Activated T-helper 2 cell treated with anti-CD3 and anti-CD28 coated beads, Interferon-gamma antibody, Interleukin-2, Interleukin-4, amounts not matched to agents 10 μg/mL and 5 μg/mL and 100 μg/mL, durations not matched to agents 14 hours and 24 hours and 36 hours (primary cell): ENCODE measurements at regions of chr15 and their contacts with region 1.

Region 1: GRCh38 chr15:73240866-73241499 is 127.8 kb downstream of the HCN4 start:
- DNase-seq: peak; percentile 55
- H3K4me3 Mint-ChIP-seq: no peak overlapping the region
- H3K27ac Mint-ChIP-seq: no peak overlapping the region
- H3K4me1 Mint-ChIP-seq: peaks cover 7% of the 10 kb centered on the region
- H3K27me3 Mint-ChIP-seq: no peaks in the 10 kb centered on the region

Region 2: DNA sequence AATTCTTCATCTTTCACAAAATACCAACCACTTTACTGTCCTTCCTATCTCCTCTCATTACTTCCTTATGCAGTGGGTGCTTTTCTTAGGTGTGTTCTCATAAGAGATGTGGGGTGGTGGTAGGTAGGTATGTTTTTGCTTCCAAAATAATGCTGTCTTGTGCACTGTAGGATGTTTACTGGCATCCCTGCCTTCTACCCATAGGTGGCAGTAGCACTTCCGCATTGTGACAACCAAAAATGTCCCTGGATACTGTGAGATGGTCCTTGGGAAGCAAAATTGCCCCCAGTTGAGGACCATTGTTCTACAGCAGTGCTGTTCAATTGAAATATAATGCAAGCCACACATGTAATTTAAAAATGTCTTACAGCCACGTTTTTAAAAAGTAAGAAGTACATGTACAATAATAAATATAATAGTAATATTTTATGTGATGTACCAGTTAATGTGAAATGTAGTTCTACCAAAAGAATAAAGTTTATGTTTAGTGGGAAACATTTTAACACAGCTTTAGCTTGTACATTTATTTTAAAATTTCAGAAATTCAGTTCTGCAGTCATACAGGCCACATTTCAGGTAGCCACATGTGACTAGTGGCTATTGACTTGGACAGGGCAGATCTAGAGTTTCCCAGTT is 113.6 kb before region 1 on chr15:
- intact Hi-C with region 1: loop called (anchors 10 kb)
- DNase-seq: no peak
- H3K4me3 Mint-ChIP-seq: no peak overlapping the region
- H3K27ac Mint-ChIP-seq: peak overlapping the region; percentile 26
- H3K4me1 Mint-ChIP-seq: peaks cover 19% of the 10 kb centered on the region
- H3K27me3 Mint-ChIP-seq: no peaks in the 10 kb centered on the region

Region 3: GRCh38 chr15:73258271-73259108 is 17.5 kb after region 1 on chr15:
- intact Hi-C with region 1: loop called (anchors 2 kb)
- DNase-seq: no peak
- H3K4me3 Mint-ChIP-seq: no peak overlapping the region
- H3K27ac Mint-ChIP-seq: peak overlapping the region; percentile 13
- H3K4me1 Mint-ChIP-seq: peaks cover 11% of the 10 kb centered on the region
- H3K27me3 Mint-ChIP-seq: no peaks in the 10 kb centered on the region

Region 4: DNA sequence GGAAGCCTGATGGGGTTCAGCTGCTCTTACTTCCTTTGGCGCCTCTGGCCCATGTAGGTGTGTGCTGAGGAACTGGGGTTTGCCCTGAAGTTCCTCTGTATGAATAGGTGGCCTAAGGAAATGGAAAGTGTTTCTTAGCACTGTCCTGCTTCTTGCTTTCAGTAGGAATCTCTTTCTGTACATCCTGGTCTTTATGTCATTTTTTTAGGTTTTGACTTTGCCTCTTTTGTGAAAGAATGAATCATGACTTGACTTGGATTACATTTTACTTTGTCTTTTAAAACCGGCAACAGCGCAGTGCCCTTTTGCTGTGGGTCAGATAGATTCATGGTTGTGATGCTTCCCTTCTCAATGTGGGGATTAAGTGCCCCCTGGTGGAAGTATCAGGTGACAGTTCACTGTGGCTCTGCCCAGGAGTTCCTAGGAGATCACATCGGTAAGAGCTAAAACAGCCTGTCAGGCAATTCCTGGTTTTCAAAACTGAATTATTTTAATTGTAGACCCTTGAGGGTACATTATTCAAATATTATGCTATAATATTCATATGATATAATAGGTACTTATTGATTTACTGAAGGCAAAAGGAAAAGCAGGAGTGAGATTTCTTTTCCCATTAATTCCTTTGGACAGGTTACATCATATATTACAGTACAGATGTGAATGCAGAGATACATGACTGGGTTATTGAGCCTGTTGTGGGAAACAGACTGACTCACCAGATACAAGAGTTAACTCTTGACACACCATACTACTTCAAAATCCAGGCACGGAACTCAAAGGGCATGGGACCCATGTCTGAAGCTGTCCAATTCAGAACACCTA is 32.4 kb after region 1 on chr15:
- intact Hi-C with region 1: loop called (anchors 1 kb)
- DNase-seq: peak; percentile 15
- H3K4me3 Mint-ChIP-seq: no peak overlapping the region
- H3K27ac Mint-ChIP-seq: no peak overlapping the region
- H3K4me1 Mint-ChIP-seq: peaks cover 4% of the 10 kb centered on the region
- H3K27me3 Mint-ChIP-seq: no peaks in the 10 kb centered on the region

Region 5: DNA sequence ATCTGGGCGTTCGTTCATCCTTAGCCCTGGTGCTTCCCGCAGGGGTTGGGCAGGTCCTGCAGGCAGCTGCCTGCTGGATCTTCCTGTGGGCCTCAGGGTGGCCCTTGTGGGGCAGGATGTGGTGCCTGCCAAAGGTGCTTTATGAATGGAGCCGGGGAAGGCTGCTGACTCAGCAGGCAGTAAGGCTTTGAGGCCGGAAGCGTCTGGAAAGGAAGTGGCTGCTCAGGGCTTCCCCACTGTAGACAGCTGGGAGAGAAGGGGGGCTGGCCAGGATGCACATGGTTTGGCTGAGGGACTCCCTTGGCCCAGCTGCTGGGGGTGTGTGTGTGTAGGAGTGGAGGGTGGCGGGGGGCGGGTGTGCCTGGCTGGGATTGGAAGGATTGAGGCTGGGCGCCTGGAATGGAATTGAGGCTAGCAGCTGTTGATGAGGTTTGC is 456.1 kb after region 1 on chr15:
- intact Hi-C with region 1: loop called (anchors 10 kb)
- DNase-seq: peak; percentile 79
- H3K4me3 Mint-ChIP-seq: peak overlapping the region; percentile 26
- H3K27ac Mint-ChIP-seq: peak overlapping the region; percentile 21
- H3K4me1 Mint-ChIP-seq: peaks cover 39% of the 10 kb centered on the region
- H3K27me3 Mint-ChIP-seq: peaks cover 43% of the 10 kb centered on the region